Posterior cingulate gyrus (tissue), 11 donors: ENCODE measurements at regions of chr20 and their contacts with region 1.

Region 1: DNA sequence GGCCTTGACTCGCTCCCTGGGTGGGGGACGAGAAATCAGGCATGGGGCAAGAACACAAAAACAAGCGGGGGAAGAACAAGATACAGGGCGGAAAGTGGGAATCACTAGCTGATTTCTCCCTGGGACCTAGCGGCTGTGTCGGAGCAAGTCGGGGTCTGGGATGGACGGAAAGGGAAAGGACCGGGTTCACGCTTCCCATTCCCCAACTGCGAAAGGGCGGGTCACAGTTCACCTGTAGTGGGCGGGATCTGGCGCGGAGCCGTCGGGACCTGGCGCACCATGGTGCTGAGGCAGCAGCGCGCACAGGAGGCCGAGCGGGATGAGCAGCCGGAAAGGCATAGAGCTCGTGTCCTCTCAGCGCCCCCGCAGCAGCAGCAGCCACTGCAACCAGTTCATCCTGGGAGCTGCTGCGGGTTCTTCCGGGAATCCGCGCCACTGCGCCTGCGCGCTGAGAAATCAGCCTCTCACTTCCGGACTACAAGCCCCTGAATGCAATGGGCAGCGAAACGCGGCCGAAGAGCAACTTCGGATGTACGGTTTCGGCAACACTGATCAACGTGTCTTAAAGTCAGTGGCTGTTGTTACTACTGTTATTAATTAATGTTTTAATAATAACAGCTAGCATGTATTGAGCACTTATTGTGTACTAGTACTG is at the start of gene EDEM2:
- DNase-seq: peak; percentile 92 to 99 (median 96)

Region 2: DNA sequence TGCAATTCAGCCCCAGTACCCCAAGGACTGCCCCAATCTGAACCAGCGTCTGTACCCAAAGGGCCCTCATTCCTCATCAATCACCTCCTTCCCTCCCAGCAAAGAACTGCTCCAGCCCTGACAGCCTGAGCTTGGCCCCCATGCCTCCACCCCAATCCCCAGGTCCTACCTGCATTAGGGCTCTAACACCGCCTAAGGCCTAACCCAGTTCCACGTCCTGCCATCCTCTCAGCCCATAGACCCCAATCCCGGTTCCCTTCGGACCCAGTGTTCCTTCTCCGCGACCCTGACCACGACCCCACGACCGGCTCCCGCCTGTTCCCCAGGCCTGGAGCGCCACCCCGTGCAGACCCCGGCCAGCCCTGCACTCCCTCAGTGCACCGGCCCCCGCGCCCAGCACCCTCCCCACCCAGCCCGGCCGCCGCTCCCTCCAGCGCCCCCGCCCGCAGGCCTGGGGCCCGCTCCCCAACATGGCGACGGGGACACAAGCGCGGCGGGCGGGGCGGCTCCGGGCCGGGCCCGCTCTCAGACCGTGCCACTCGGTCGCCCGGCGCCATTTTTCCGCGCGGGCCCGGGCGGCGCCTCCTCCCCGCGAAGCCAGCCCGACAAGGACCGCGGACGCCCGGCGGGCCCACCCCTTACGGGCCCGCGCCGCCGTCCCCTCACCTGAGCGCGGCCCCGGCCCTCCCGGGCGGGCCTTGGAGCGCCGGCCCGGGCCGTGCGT is 322.1 kb before region 1 on chr20:
- intact Hi-C with region 1: no loop called
- DNase-seq: peak; percentile 53 to 95 (median 74)

Region 3: DNA sequence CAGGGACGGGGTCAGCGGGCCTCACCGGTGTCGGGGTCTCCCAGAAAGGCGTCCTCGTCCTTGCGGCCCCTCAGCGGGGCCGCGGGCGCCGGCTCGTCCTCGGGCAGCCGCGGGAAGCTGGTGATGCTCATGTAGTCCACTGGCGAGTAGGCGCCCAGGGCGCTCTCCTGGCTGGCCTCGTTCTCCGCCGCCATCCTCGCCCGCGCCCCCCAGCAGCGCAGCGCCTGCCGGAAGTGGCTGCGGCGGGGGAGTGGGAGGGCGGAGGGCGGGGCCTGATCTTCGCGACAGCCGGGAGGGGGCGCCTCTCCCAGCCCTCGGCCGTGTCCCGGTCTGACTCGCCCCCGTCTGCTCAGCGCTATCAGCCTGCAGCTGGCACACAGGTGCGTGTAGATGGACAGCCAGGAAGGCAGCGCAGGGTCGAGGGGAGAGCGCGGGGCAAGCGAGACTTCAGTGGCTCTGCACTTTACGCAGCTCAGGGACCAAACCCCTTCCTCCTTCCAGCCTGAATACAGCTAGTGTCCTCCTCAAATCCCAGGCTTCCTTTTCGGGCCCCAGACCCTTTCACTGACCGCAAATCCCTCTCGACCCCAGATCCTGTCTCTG is 274.3 kb before region 1 on chr20 and contains the start of gene GGT7:
- intact Hi-C with region 1: loop called (anchors 5 kb)
- DNase-seq: peak; percentile 79 to 97 (median 86)